ENCODE measurements at regions of chr1 and their contacts with region 1.

Region 1: DNA sequence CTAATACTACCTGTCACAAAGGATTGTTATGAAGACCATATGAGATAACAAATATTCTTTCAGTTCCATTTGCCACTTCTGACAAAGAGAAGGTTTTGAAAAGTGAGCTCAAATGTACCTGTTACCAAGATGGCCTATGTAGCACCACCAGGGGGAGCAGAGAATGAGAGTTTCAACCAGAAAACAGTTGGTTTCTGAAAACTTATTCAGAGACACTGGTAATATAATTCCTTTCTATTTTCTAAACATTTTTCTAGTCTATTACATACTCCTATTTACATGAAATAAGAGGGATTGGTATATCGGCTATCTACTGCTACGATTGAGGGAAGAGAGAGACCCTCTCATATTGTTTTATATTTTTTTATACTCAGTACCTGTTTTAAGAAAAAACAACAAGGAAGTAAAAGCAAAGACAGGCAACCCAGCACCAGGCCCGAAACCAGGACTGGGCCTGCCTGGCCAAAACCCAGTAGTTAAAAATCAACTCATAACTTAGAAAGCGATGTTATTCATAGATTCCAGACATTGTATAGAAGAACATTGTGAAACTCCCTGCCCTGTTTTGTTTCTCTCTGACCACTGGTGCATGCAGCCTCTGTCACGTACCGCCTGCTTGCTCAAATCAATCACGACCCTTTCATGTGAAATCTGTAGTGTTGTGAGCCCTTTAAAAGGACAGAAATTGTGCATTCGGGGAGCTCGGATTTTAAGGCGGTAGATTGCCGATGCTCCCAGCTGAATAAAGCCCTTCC is 48.3 kb downstream of the IL23R start:
- DNase-seq: peak; percentile 50
- ATAC-seq: peak; percentile 28
- H3K4me3 ChIP-seq: no peak overlapping the region
- H3K4me3 Mint-ChIP-seq: no peak overlapping the region
- H3K27ac ChIP-seq: no peak overlapping the region
- H3K27ac Mint-ChIP-seq: no peak overlapping the region
- H3K4me1 ChIP-seq: peaks cover 0 to 8% of the 10 kb centered on the region in 2 donors
- H3K4me1 Mint-ChIP-seq: peaks cover 9% of the 10 kb centered on the region
- H3K27me3 ChIP-seq: no peaks in the 10 kb centered on the region
- H3K27me3 Mint-ChIP-seq: no peaks in the 10 kb centered on the region
- CTCF ChIP-seq: peak; percentile 70

Region 2: GRCh38 chr1:66758241-66758755 is 456.3 kb before region 1 on chr1:
- CTCF ChIA-PET with region 1: interaction called, 10 read pairs
- POLR2A ChIA-PET with region 1: no interaction called
- intact Hi-C with region 1: no loop called
- DNase-seq: peak; percentile 49
- ATAC-seq: peak; percentile 47
- H3K4me3 ChIP-seq: no peak overlapping the region
- H3K4me3 Mint-ChIP-seq: no peak overlapping the region
- H3K27ac ChIP-seq: peak overlapping the region in 1 of 2 donors; percentile 3
- H3K27ac Mint-ChIP-seq: peak overlapping the region; percentile 26
- H3K4me1 ChIP-seq: peaks cover 10 to 11% of the 10 kb centered on the region in 2 donors
- H3K4me1 Mint-ChIP-seq: peaks cover 12% of the 10 kb centered on the region
- H3K27me3 ChIP-seq: peaks cover 0 to 7% (median 0%) of the 10 kb centered on the region in 4 experiments
- H3K27me3 Mint-ChIP-seq: peaks cover 7% of the 10 kb centered on the region
- CTCF ChIP-seq: no peak

Region 3: GRCh38 chr1:66764994-66765578 is 449.5 kb before region 1 on chr1:
- CTCF ChIA-PET with region 1: interaction called, 40 read pairs
- POLR2A ChIA-PET with region 1: no interaction called
- intact Hi-C with region 1: no loop called
- DNase-seq: peak; percentile 61
- ATAC-seq: peak; percentile 41
- H3K4me3 ChIP-seq: no peak overlapping the region
- H3K4me3 Mint-ChIP-seq: no peak overlapping the region
- H3K27ac ChIP-seq: no peak overlapping the region
- H3K27ac Mint-ChIP-seq: no peak overlapping the region
- H3K4me1 ChIP-seq: no peaks in the 10 kb centered on the region
- H3K4me1 Mint-ChIP-seq: no peaks in the 10 kb centered on the region
- H3K27me3 ChIP-seq: no peaks in the 10 kb centered on the region
- H3K27me3 Mint-ChIP-seq: no peaks in the 10 kb centered on the region
- CTCF ChIP-seq: peak; percentile 88